Right lobe of liver (tissue), 6 donors: ENCODE measurements at regions of chr1 and their contacts with region 1.

Region 1: GRCh38 chr1:43238085-43238484 is 31.7 kb upstream of the TMEM125 start:
- DNase-seq: peak; percentile 67 to 90 (median 79)
- ATAC-seq: peak; percentile 76 to 90 (median 81)
- H3K4me3 ChIP-seq: no peak overlapping the region
- H3K27ac ChIP-seq: peak overlapping the region in 1 of 3 donors; percentile 74
- H3K4me1 ChIP-seq: peaks cover 0 to 87% (median 36%) of the 10 kb centered on the region in 4 donors
- H3K27me3 ChIP-seq: no peaks in the 10 kb centered on the region
- CTCF ChIP-seq: peak; percentile 80 to 91 (median 83)
- POLR2A ChIP-seq: no peak

Region 2: GRCh38 chr1:43389326-43390313 is 151.5 kb after region 1 on chr1 and contains the starts of genes MED8 and SZT2:
- intact Hi-C with region 1: loop called (anchors 10 kb)
- DNase-seq: peak; percentile 93 to 98 (median 96)
- ATAC-seq: peak; percentile 99 to 100 (median 99)
- H3K4me3 ChIP-seq: peak within 1 kb of the TSS; percentile 89 to 93 (median 91)
- H3K27ac ChIP-seq: peak within 1 kb of the TSS; percentile 67 to 82 (median 74)
- H3K4me1 ChIP-seq: peaks cover 0 to 22% (median 10%) of the 10 kb centered on the region in 4 donors
- H3K27me3 ChIP-seq: no peaks in the 10 kb centered on the region
- CTCF ChIP-seq: no peak
- POLR2A ChIP-seq: peak; percentile 87
- total RNA-seq, gene MED8: 20.7 to 26.6 (median 24.1) TPM
- total RNA-seq, gene SZT2: 12.7 to 30.4 (median 19.2) TPM